ENCODE measurements at regions of chr11 and their contacts with region 1.

Region 1: DNA sequence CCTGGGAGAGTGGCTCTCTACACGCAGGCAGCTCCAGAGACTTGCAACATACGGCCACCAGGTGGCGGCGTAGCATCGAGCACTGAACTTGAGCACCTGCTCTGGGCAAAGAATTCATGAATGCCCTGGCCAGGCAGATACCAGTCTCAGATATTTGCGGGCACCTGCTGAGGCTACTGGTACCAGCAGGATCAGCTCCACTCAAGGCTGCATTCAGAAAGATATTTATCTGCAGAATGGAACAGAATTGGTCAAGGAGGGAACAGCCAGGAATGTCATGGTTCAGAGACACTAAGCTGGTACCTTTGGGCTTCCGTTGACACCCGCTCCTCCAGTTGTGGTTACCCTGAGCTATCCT is 10.8 kb upstream of the CCDC86 start:
- DNase-seq: peak; percentile 90
- H3K4me3 Mint-ChIP-seq: no peak overlapping the region
- H3K27ac Mint-ChIP-seq: no peak overlapping the region
- H3K4me1 Mint-ChIP-seq: no peaks in the 10 kb centered on the region
- H3K27me3 Mint-ChIP-seq: no peaks in the 10 kb centered on the region

Region 2: GRCh38 chr11:60841797-60842667 is 10.9 kb after region 1 on chr11 and contains the start of gene CCDC86:
- CTCF ChIA-PET with region 1: interaction called, 20 read pairs
- intact Hi-C with region 1: no loop called
- DNase-seq: peak; percentile 98
- H3K4me3 Mint-ChIP-seq: peak within 1 kb of the TSS; percentile 78
- H3K27ac Mint-ChIP-seq: peak within 1 kb of the TSS; percentile 86
- H3K4me1 Mint-ChIP-seq: peaks cover 33% of the 10 kb centered on the region
- H3K27me3 Mint-ChIP-seq: no peaks in the 10 kb centered on the region
- total RNA-seq, gene CCDC86: 38.8 to 41.2 TPM

Region 3: GRCh38 chr11:60887556-60887955 is 56.4 kb after region 1 on chr11:
- CTCF ChIA-PET with region 1: interaction called, 49 read pairs
- intact Hi-C with region 1: loop called (anchors 1 kb)
- DNase-seq: peak; percentile 61
- H3K4me3 Mint-ChIP-seq: no peak overlapping the region
- H3K27ac Mint-ChIP-seq: no peak overlapping the region
- H3K4me1 Mint-ChIP-seq: peaks cover 2% of the 10 kb centered on the region
- H3K27me3 Mint-ChIP-seq: no peaks in the 10 kb centered on the region

Region 4: DNA sequence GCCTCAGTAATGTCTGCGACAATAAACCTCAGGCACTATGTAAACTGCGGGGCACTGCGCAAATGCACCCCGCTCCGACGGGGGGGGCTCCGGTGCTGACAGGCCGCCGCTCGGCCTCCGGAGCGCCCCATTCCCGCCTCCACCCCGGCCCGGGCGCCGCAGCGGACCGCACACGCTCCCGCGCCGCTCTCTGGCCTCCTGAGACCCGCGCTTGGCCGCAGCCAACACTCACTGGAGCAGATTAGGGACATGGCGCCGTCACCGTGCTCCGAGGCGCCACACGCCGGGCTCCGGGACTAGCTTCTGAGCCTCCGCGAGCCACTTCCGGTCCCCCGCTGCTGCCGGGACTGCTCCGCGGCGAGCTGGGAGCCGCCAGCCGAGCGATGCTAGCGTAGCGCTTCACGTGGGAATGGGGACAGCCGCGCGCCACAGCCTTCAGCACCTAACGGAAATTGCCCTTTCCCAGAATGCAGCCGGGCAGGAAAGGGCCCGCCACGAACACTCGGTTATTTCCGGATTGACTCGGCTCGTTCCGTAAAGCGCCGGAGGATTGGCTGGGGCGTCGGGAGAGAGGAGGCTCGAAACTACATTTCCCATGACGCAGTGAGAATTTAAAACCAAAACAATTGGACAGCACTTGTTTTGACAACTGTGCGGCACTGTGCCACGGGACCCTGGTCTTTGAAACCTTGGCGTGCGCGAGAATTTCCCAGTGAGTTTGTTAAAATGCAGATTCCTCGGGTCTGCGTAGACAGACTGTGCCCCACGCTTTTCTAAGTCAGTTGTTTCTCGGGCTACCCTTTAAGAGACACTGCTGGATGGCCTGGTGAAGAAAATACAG is 75.2 kb after region 1 on chr11 and contains the start of gene PRPF19:
- CTCF ChIA-PET with region 1: interaction called, 17 read pairs
- intact Hi-C with region 1: no loop called
- DNase-seq: peak; percentile 100
- H3K4me3 Mint-ChIP-seq: peak within 1 kb of the TSS; percentile 80
- H3K27ac Mint-ChIP-seq: peak within 1 kb of the TSS; percentile 92
- H3K4me1 Mint-ChIP-seq: peaks cover 40% of the 10 kb centered on the region
- H3K27me3 Mint-ChIP-seq: no peaks in the 10 kb centered on the region
- total RNA-seq, gene PRPF19: 108 to 119 TPM

Region 5: GRCh38 chr11:61384271-61385242 is 553.4 kb after region 1 on chr11:
- CTCF ChIA-PET with region 1: interaction called, 15 read pairs
- intact Hi-C with region 1: loop called (anchors 1 kb)
- DNase-seq: no peak
- H3K4me3 Mint-ChIP-seq: no peak overlapping the region
- H3K27ac Mint-ChIP-seq: no peak overlapping the region
- H3K4me1 Mint-ChIP-seq: peaks cover 3% of the 10 kb centered on the region
- H3K27me3 Mint-ChIP-seq: no peaks in the 10 kb centered on the region

Measured in activated naive CD4-positive, alpha-beta T cell treated with anti-CD3 and anti-CD28 coated beads for 36 hours (primary cell).